HCT116 (cell line): ENCODE measurements at regions of chr15 and their contacts with region 1.

Region 1: DNA sequence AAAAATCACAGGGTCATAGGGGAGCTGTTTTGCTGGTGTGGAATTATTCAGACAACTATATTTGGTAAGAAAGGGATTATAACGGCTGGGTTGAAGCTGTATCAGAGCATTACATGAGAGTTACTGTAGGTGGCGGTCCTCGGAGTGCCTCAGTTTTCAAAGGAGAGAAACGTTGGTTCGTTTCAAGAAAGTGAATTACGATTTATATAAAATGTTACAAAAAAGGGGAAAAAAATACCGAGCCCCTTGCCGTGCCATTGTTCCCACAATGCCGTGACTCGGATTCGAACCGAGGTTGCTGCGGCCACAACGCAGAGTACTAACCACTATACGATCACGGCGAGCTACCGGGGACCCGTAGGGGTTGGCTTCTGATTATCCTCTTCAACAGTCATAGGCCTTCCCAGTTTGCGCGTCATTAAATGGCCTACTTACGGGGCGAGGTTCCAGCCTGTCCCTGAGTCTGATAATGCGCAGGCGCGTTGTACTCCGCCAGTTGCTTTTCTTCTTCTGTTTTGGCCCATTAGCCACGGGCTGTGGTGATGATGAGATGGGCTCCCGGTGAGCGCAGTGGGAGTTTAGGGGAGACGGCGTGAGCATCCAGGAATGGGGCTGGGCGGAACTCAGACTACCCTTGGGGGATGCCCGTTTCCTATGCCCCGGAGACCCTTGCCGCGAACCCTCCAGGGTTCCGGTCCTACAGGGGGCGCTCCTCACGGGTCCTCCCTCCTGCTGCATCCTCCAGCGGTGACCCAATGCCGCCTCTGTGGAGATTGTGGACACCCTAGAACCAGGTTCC is 10.8 kb upstream of the SHF start:
- DNase-seq: peak; percentile 94
- ATAC-seq: peak; percentile 71
- H3K4me3 ChIP-seq: peak overlapping the region; percentile 58 to 62
- H3K27ac ChIP-seq: peak overlapping the region; percentile 76
- H3K4me1 ChIP-seq: peaks cover 11 to 36% of the 10 kb centered on the region in 2 experiments
- H3K27me3 ChIP-seq: no peaks in the 10 kb centered on the region
- CTCF ChIP-seq: peak in 2 of 3 experiments; percentile 79 to 86; a peak in 4 of 6 replicates
- POLR2A ChIP-seq: peak; percentile 52
- RAD21 ChIP-seq: no peak

Region 2: GRCh38 chr15:45126535-45127158 is 71.9 kb before region 1 on chr15:
- CTCF ChIA-PET with region 1: no interaction called
- POLR2A ChIA-PET with region 1: no interaction called
- RAD21 ChIA-PET with region 1: no interaction called
- intact Hi-C with region 1: no loop called
- DNase-seq: peak; percentile 36
- ATAC-seq: peak; percentile 57
- H3K4me3 ChIP-seq: no peak overlapping the region
- H3K27ac ChIP-seq: no peak overlapping the region
- H3K4me1 ChIP-seq: peaks cover 9 to 22% of the 10 kb centered on the region in 2 experiments
- H3K27me3 ChIP-seq: no peaks in the 10 kb centered on the region
- CTCF ChIP-seq: peak; percentile 71 to 92 (median 78)
- POLR2A ChIP-seq: no peak
- RAD21 ChIP-seq: peak; percentile 68

Region 3: DNA sequence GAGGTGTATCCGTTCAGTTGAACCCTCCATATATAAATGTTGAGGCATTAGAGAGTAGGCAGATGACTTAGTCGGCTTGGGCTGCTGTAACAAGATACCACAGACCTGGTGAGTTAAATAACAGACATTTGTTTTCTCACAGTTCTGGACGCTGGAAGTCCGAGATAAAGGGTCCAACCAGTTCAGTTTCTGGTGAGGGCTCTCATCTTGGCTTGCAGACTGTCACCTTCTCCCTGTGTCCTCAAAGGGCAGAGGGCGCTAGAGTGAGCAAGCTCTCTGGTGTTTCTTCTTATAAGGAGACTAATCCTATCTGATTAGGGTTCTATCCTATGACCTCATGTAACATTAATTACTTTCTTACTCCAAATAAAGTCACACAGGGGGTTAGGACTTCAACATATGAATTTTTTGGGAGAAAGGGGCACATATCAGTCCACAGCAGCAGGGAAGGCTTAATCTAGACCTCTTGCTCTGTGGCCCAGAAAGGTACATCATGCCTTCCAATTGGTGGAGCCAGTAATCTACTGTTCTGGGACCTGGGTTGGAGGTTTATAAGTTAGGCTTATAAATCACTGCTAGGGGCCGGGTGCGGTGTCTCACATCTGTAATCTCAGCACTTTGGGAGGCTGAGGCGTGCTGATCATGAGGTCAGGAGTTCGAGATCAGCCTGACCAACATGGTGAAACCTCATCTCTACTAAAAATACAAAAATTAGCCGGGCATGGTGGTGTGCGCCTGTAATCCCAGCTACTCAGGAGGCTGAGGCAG is 27.2 kb after region 1 on chr15:
- CTCF ChIA-PET with region 1: no interaction called
- POLR2A ChIA-PET with region 1: no interaction called
- RAD21 ChIA-PET with region 1: no interaction called
- intact Hi-C with region 1: no loop called
- DNase-seq: no peak
- ATAC-seq: peak; percentile 42; the same call in 1 of the 2 replicates
- H3K4me3 ChIP-seq: no peak overlapping the region
- H3K27ac ChIP-seq: no peak overlapping the region
- H3K4me1 ChIP-seq: no peaks in the 10 kb centered on the region
- H3K27me3 ChIP-seq: no peaks in the 10 kb centered on the region
- CTCF ChIP-seq: peak in 1 of 3 experiments; percentile 12; a peak in 1 of 6 replicates
- POLR2A ChIP-seq: no peak
- RAD21 ChIP-seq: no peak

Region 4: DNA sequence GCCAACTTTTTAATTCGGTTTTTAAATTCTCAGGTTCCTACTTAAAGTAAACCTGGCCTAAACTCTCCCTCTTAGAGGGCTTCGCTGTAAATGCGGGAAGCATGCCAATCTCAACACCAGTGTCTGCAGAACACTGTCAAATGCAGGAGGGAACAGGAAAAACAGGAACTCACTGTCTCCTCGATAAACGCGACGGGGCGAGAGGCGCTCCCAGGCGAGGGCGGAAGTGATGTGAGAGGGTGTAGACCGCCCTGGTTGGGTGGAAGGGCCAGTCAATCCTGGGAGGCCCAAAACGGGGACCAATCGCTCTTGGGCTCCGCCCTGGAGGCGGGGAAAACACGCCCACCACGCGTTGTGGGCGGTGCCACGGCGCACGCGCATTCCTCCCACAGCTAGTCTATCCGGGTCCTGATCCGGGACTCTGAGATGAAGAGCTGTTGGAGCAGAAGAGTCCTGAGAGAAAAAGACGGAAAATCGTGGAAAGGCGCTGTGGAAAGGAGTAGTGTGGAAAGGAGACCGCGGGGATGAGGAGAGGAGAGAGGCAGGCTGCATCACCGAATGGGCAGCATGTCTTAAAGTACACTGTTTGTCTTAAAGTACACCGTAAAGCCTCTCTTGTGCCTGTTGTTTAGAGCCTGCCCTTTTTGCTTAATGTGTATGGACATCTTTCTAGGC is 80.6 kb after region 1 on chr15:
- CTCF ChIA-PET with region 1: interaction called, 5 read pairs
- POLR2A ChIA-PET with region 1: interaction called, 3 read pairs
- RAD21 ChIA-PET with region 1: no interaction called
- intact Hi-C with region 1: loop called (anchors 1 kb)
- DNase-seq: peak; percentile 96
- ATAC-seq: peak; percentile 100
- H3K4me3 ChIP-seq: peak overlapping the region; percentile 64 to 81
- H3K27ac ChIP-seq: peak overlapping the region; percentile 27
- H3K4me1 ChIP-seq: peaks cover 3 to 13% of the 10 kb centered on the region in 2 experiments; a peak in 3 of 4 replicates
- H3K27me3 ChIP-seq: 0 out of 2 replicates have a peak, but pooled peaks cover under 1% of the 10 kb centered on the region
- CTCF ChIP-seq: no peak
- POLR2A ChIP-seq: peak; percentile 91
- RAD21 ChIP-seq: no peak

Region 5: DNA sequence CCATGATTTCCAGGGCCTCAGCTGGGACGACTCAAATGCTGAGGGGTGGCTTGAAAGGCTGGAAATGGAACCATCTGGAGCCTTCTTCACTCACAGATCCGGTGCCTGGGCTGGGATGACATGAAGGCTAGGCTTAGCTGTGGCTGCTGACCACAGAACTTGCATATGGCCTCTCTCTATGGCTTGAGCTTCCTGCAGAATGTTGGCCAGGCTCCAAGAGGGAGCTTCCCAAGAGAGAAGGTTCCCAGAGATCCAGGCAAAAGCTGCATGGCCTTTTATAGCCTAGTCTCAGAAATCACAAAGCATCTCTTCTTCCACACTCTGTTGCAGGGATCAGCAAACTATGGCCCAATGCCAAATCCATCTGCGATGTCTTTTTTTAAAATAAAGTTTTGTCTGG is 135.0 kb after region 1 on chr15:
- CTCF ChIA-PET with region 1: no interaction called
- POLR2A ChIA-PET with region 1: no interaction called
- RAD21 ChIA-PET with region 1: no interaction called
- intact Hi-C with region 1: no loop called
- DNase-seq: no peak
- ATAC-seq: no peak
- H3K4me3 ChIP-seq: no peak overlapping the region
- H3K27ac ChIP-seq: no peak overlapping the region
- H3K4me1 ChIP-seq: no peaks in the 10 kb centered on the region
- H3K27me3 ChIP-seq: no peaks in the 10 kb centered on the region
- CTCF ChIP-seq: no peak
- POLR2A ChIP-seq: no peak
- RAD21 ChIP-seq: no peak

Region 6: GRCh38 chr15:45611305-45611704 is 412.8 kb after region 1 on chr15:
- CTCF ChIA-PET with region 1: interaction called, 4 read pairs
- POLR2A ChIA-PET with region 1: no interaction called
- RAD21 ChIA-PET with region 1: no interaction called
- intact Hi-C with region 1: loop called (anchors 10 kb)
- DNase-seq: no peak
- ATAC-seq: no peak
- H3K4me3 ChIP-seq: no peak overlapping the region
- H3K27ac ChIP-seq: no peak overlapping the region
- H3K4me1 ChIP-seq: peaks cover 0 to 5% of the 10 kb centered on the region in 2 experiments; a peak in 1 of 4 replicates
- H3K27me3 ChIP-seq: no peaks in the 10 kb centered on the region
- CTCF ChIP-seq: peak; percentile 37 to 67 (median 60); a peak in 4 of 6 replicates
- POLR2A ChIP-seq: no peak
- RAD21 ChIP-seq: peak; percentile 57